CD4-positive, alpha-beta T cell (primary cell): ENCODE measurements at regions of chr2 and their contacts with region 1.

Region 1: GRCh38 chr2:27628767-27629709 is at the starts of genes CCDC121 and GPN1:
- DNase-seq: peak; percentile 89 to 97 (median 94)
- ATAC-seq: peak; percentile 99
- H3K4me3 ChIP-seq: peak within 1 kb of the TSS; percentile 86
- H3K4me3 Mint-ChIP-seq: no peak within 1 kb of the TSS
- H3K27ac ChIP-seq: peak within 1 kb of the TSS; percentile 72 to 78
- H3K27ac Mint-ChIP-seq: no peak within 1 kb of the TSS
- H3K4me1 ChIP-seq: peaks cover 21% of the 10 kb centered on the region
- H3K4me1 Mint-ChIP-seq: peaks cover 20% of the 10 kb centered on the region
- H3K27me3 ChIP-seq: no peaks in the 10 kb centered on the region
- H3K27me3 Mint-ChIP-seq: no peaks in the 10 kb centered on the region
- CTCF ChIP-seq: no peak
- total RNA-seq, gene CCDC121: 0.47 to 0.91 TPM
- total RNA-seq, gene GPN1: 24.6 to 28.1 TPM

Region 2: DNA sequence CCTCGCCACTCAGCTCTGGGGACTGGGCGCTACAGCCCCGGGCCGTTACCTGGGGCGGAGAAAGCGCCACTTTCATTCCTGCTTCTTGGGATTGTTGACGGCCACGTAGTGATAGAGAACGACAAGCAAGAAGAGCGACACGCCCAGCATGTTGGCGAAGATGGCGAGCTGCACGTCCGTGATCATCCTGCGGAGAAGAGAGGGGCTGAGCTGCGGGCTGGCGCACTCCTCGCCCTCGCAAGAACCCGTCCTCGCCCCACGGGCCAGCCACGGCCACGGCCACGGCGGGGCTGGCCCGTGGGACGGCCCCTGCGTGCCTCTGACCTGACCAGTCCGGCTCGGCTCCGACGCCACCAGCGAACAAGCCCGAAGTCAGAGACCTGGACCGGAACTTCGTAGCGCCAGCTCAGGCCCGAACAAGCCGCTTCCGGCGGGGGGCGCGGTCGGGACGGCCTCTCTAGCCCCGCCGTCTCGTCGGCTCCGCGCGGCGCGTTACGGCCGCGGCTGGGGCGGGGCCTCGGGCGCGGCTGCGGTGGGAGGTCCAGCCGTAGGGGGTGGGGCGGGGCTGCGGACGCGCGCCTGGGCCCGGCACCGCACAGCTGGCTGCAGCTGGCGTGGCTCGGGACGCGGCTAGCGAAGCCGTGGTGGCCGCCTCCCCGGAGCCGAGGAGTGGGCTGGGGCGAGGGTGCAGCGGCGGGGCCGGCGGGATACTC is 557.6 kb before region 1 on chr2 and contains the start of gene OST4:
- CTCF ChIA-PET with region 1: no interaction called
- POLR2A ChIA-PET with region 1: no interaction called
- intact Hi-C with region 1: loop called in 1 of 2 experiments (anchors 2 kb)
- DNase-seq: peak; percentile 76 to 95 (median 86)
- ATAC-seq: peak; percentile 86
- H3K4me3 ChIP-seq: peak within 1 kb of the TSS; percentile 99
- H3K4me3 Mint-ChIP-seq: peak within 1 kb of the TSS; percentile 99
- H3K27ac ChIP-seq: peak within 1 kb of the TSS; percentile 90 to 91
- H3K27ac Mint-ChIP-seq: peak within 1 kb of the TSS; percentile 98
- H3K4me1 ChIP-seq: peaks cover 74% of the 10 kb centered on the region
- H3K4me1 Mint-ChIP-seq: peaks cover 84% of the 10 kb centered on the region
- H3K27me3 ChIP-seq: no peaks in the 10 kb centered on the region
- H3K27me3 Mint-ChIP-seq: no peaks in the 10 kb centered on the region
- CTCF ChIP-seq: no peak
- total RNA-seq, gene OST4: 232 to 254 TPM

Region 3: GRCh38 chr2:27409321-27410073 is 219.5 kb before region 1 on chr2 and contains the start of gene PPM1G:
- CTCF ChIA-PET with region 1: no interaction called
- POLR2A ChIA-PET with region 1: interaction called, 12 read pairs
- intact Hi-C with region 1: loop called in 1 of 2 experiments (anchors 10 kb)
- DNase-seq: peak; percentile 92 to 98 (median 96)
- ATAC-seq: peak; percentile 95
- H3K4me3 ChIP-seq: peak within 1 kb of the TSS; percentile 82
- H3K4me3 Mint-ChIP-seq: peak within 1 kb of the TSS; percentile 90
- H3K27ac ChIP-seq: peak within 1 kb of the TSS; percentile 85 to 90
- H3K27ac Mint-ChIP-seq: peak within 1 kb of the TSS; percentile 82
- H3K4me1 ChIP-seq: peaks cover 33% of the 10 kb centered on the region
- H3K4me1 Mint-ChIP-seq: peaks cover 41% of the 10 kb centered on the region
- H3K27me3 ChIP-seq: no peaks in the 10 kb centered on the region
- H3K27me3 Mint-ChIP-seq: no peaks in the 10 kb centered on the region
- CTCF ChIP-seq: no peak
- total RNA-seq, gene PPM1G: 30.4 to 31.2 TPM

Region 4: DNA sequence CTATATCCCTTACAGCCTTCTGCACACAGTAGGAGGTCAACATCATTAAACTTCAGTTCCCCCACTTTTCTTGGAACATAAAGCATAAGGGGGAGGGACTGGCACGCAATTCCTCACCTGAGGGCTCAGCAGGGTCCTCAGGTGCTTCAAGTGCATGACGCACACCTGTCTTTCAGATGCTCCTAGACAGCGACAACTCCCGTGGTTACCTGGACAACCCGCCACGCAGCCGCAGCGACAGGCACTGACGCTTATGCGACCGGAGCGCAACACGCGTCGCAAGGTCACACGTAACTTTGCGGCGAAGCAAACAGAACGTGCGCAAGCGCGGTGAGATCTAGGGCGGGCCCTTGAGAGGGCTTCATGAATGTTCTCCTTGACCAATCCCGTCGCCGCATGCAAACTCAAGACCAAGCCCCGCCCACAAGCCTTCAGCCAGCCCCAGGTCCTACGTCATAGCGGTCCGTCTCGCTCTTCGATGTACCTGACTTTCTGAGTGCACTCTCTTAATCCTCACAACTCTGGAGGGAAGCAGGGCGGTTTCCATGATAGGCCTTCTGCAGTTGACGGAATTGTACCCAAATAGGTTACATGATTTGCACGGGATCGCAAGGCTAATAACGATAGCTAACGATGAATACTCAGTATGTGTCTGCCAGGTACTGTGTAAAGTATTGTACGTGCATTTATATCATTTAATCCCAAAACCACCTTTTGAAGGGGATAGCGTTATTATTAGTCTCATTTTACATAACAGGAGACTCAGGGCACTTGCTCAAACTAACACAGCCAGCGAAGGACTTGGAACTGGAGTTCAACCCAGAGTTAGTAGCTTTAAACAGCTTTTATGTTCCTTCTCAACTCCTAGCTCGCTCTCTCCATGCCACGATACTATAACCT is 139.3 kb before region 1 on chr2 and contains the start of gene IFT172:
- CTCF ChIA-PET with region 1: no interaction called
- POLR2A ChIA-PET with region 1: no interaction called
- intact Hi-C with region 1: loop called (anchors 2 kb)
- DNase-seq: peak; percentile 97 to 100 (median 99)
- ATAC-seq: peak; percentile 85
- H3K4me3 ChIP-seq: peak within 1 kb of the TSS; percentile 61
- H3K4me3 Mint-ChIP-seq: peak within 1 kb of the TSS; percentile 80
- H3K27ac ChIP-seq: peak within 1 kb of the TSS; percentile 55 to 91
- H3K27ac Mint-ChIP-seq: peak within 1 kb of the TSS; percentile 93
- H3K4me1 ChIP-seq: peaks cover 20% of the 10 kb centered on the region
- H3K4me1 Mint-ChIP-seq: peaks cover 18% of the 10 kb centered on the region
- H3K27me3 ChIP-seq: peaks cover 11 to 13% of the 10 kb centered on the region in 2 experiments
- H3K27me3 Mint-ChIP-seq: peaks cover 12% of the 10 kb centered on the region
- CTCF ChIP-seq: no peak
- total RNA-seq, gene IFT172: 13.3 to 14.4 TPM

Region 5: GRCh38 chr2:27683390-27684071 is 54.5 kb after region 1 on chr2:
- CTCF ChIA-PET with region 1: interaction called, 17 read pairs
- POLR2A ChIA-PET with region 1: no interaction called
- intact Hi-C with region 1: no loop called
- DNase-seq: peak; percentile 63 to 95 (median 81)
- ATAC-seq: peak; percentile 91
- H3K4me3 ChIP-seq: no peak overlapping the region
- H3K4me3 Mint-ChIP-seq: no peak overlapping the region
- H3K27ac ChIP-seq: no peak overlapping the region
- H3K27ac Mint-ChIP-seq: peak overlapping the region; percentile 58
- H3K4me1 ChIP-seq: peaks cover 12% of the 10 kb centered on the region
- H3K4me1 Mint-ChIP-seq: peaks cover 7% of the 10 kb centered on the region
- H3K27me3 ChIP-seq: no peaks in the 10 kb centered on the region
- H3K27me3 Mint-ChIP-seq: no peaks in the 10 kb centered on the region
- CTCF ChIP-seq: peak; percentile 99

Region 6: GRCh38 chr2:28745876-28746275 is 1116.8 kb after region 1 on chr2:
- CTCF ChIA-PET with region 1: no interaction called
- POLR2A ChIA-PET with region 1: no interaction called
- intact Hi-C with region 1: no loop called
- DNase-seq: no peak
- ATAC-seq: no peak
- H3K4me3 ChIP-seq: no peak overlapping the region
- H3K4me3 Mint-ChIP-seq: no peak overlapping the region
- H3K27ac ChIP-seq: no peak overlapping the region
- H3K27ac Mint-ChIP-seq: no peak overlapping the region
- H3K4me1 ChIP-seq: peaks cover 35% of the 10 kb centered on the region
- H3K4me1 Mint-ChIP-seq: peaks cover 34% of the 10 kb centered on the region
- H3K27me3 ChIP-seq: no peaks in the 10 kb centered on the region
- H3K27me3 Mint-ChIP-seq: no peaks in the 10 kb centered on the region
- CTCF ChIP-seq: no peak

Region 7: GRCh38 chr2:29155578-29155977 is 1526.5 kb after region 1 on chr2:
- CTCF ChIA-PET with region 1: no interaction called
- POLR2A ChIA-PET with region 1: no interaction called
- intact Hi-C with region 1: no loop called
- DNase-seq: no peak
- ATAC-seq: no peak
- H3K4me3 ChIP-seq: no peak overlapping the region
- H3K4me3 Mint-ChIP-seq: no peak overlapping the region
- H3K27ac ChIP-seq: no peak overlapping the region
- H3K27ac Mint-ChIP-seq: no peak overlapping the region
- H3K4me1 ChIP-seq: no peaks in the 10 kb centered on the region
- H3K4me1 Mint-ChIP-seq: no peaks in the 10 kb centered on the region
- H3K27me3 ChIP-seq: no peaks in the 10 kb centered on the region
- H3K27me3 Mint-ChIP-seq: no peaks in the 10 kb centered on the region
- CTCF ChIP-seq: no peak